ENCODE measurements at regions of chr1 and their contacts with region 1.

Region 1: GRCh38 chr1:40421431-40422384 is 28.6 kb upstream of the ZFP69B start:
- DNase-seq: no peak
- H3K4me3 ChIP-seq: no peak overlapping the region
- H3K27ac ChIP-seq: no peak overlapping the region
- H3K4me1 ChIP-seq: no peaks in the 10 kb centered on the region
- H3K27me3 ChIP-seq: no peaks in the 10 kb centered on the region
- CTCF ChIP-seq: no peak
- POLR2A ChIP-seq: no peak

Region 2: DNA sequence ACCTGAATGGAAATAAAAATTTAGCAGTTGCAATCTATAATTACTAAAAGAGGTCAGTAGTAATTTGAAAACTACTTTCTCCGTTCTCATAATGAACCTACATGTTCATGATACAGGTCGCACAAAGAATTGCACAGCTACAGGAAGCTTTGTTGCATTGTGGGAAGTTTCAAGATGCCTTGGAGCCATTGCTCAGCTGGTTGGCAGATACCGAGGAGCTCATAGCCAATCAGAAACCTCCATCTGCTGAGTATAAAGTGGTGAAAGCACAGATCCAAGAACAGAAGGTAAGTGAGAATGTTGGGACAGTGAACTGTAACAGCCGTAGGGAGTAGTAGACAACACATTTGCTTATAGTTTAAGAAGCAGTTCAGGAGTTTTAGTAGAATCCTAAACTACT is 999.1 kb before region 1 on chr1:
- CTCF ChIA-PET with region 1: no interaction called
- POLR2A ChIA-PET with region 1: no interaction called
- dilution Hi-C with region 1: no loop called
- intact Hi-C with region 1: no loop called
- DNase-seq: no peak
- H3K4me3 ChIP-seq: no peak overlapping the region
- H3K27ac ChIP-seq: no peak overlapping the region
- H3K4me1 ChIP-seq: no peaks in the 10 kb centered on the region
- H3K27me3 ChIP-seq: no peaks in the 10 kb centered on the region
- CTCF ChIP-seq: no peak
- POLR2A ChIP-seq: no peak

Region 3: GRCh38 chr1:40438391-40439015 is 16.8 kb after region 1 on chr1:
- CTCF ChIA-PET with region 1: interaction called, 34 read pairs
- POLR2A ChIA-PET with region 1: no interaction called
- dilution Hi-C with region 1: no loop called
- intact Hi-C with region 1: no loop called
- DNase-seq: peak; percentile 51
- H3K4me3 ChIP-seq: no peak overlapping the region
- H3K27ac ChIP-seq: no peak overlapping the region
- H3K4me1 ChIP-seq: no peaks in the 10 kb centered on the region
- H3K27me3 ChIP-seq: no peaks in the 10 kb centered on the region
- CTCF ChIP-seq: peak; percentile 67 to 82
- POLR2A ChIP-seq: no peak

Measured in endothelial cell of umbilical vein (primary cell).